Left cardiac atrium (tissue), 4 donors: ENCODE measurements at regions of chr3 and their contacts with region 1.

Region 1: GRCh38 chr3:58532794-58533220 is 4.2 kb downstream of the ACOX2 start:
- DNase-seq: peak; percentile 74
- ATAC-seq: peak; percentile 43 to 58

Region 2: DNA sequence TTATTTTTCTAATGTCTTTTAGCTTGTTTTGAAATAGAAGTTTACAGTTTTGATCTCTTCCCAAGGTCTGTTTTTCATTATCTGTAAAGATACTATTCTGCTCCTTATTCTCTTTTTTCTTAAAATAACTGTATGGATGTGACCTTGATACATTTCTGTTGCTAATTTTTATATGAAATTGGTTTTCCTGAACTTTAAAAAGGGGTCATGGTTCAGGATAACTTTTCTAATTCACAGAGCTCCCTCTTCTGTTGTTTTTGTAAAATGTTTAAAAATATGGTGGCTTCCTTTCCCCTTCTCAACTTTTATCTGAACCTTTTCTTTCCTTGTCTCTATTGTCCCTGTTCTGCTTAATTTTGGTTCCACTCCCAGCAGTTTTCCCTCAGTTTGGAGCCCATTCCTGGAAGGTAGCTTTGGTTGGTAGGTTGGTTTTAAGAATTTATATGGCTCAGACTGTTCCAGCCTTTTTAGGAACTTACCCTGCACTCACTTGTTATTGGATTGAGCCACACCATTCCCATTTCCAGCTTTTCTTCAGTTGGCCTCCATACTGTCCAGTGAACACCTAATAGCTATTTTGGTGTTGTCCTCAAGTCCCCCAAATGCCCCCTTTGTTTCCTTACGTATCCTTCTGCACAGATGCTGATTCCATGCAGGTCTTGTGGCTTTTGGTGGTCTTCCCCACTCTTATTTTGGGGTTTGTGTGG is 706.4 kb before region 1 on chr3:
- intact Hi-C with region 1: no loop called
- DNase-seq: no peak
- ATAC-seq: no peak

Region 3: DNA sequence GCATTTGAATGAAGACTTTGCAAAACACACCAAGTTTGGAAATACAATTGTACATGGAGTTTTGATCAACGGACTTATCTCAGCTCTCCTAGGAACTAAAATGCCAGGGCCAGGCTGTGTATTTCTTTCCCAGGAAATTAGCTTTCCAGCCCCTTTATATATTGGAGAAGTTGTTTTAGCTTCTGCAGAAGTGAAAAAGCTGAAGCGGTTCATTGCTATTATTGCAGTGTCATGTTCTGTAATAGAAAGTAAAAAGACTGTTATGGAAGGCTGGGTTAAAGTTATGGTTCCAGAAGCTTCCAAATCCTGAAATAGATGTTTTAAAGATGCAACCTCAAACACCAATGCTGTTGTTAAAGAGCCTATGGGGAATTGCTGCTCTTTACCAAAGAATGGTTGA is 215.0 kb before region 1 on chr3:
- intact Hi-C with region 1: loop called in 1 of 2 experiments (anchors 5 kb)
- DNase-seq: no peak
- ATAC-seq: no peak

Region 4: GRCh38 chr3:58388550-58389091 is 144.2 kb before region 1 on chr3:
- intact Hi-C with region 1: no loop called
- DNase-seq: no peak
- ATAC-seq: no peak

Region 5: DNA sequence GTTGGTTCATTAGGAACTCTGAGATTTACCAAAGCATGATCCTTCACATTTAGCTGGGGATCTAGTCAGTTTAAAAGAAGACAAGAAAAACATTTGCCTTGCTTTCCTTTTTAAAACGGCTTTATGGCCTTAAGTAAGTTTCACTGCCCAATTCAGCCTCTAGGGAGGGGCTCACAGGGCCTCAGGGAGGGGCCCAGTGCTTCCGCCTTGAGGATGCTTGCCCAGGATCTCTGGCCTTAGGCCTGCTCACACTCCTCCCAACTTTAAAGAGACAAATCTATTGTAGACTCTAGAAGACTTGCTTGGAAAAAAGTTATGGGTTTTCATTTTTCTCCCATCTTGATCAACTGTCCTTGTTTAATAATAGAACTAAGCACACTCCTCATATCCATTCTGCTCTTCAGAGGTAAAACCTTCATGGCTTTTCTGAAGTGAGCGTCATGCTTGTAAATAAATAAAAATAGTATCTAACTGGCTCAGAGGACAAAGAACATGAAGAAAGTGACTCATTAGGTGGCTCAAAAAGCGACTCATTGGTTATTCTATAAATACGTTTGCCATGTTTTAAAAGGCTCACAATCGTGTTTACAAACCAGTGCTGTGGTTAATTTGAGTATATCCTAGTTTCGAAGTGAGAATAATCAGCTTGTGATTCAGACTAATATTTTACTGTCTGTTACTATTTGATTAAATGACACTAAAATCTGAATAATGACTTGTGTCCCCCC is 112.9 kb before region 1 on chr3:
- intact Hi-C with region 1: loop called in 1 of 2 experiments (anchors 5 kb)
- DNase-seq: peak; percentile 68
- ATAC-seq: peak; percentile 78 to 87

Region 6: DNA sequence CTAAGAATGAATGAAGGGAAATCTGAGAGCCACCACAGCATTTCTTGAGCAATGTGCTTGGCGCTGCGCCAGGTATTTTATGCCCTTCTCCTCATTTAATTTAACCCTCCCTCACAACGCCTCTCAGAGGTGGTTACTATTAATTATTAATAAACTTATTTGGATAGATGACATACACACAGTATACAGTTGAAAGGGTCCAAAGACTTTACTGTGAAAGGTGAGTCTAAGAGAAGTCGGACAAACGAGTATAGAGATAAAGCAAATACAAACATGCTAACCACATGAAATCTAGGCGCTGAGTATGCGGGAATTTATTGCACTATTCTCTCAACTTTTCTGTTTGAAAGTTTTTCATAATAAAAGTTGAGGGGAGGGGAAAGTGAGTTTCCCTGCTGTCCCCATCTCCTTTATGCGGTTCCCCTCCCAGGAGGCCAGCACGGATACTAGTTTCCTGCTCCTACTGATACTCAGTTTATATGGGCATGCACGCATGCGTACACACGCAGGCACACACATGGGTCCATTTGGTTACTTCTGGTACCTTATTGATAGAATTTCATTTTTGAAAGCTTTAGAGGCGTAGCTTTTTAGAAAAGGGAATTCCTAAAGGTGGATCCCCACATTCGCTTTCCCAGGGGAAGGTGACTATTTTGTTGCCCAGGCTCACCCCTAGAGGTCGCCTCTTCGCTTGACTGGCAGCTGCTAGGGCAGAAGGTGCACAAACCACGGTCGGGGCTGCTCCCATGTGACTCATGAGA is 69.4 kb before region 1 on chr3:
- intact Hi-C with region 1: loop called in 1 of 2 experiments (anchors 5 kb)
- DNase-seq: peak; percentile 80
- ATAC-seq: peak; percentile 90 to 97

Region 7: GRCh38 chr3:58998476-58999117 is 465.8 kb after region 1 on chr3:
- intact Hi-C with region 1: no loop called
- DNase-seq: no peak
- ATAC-seq: peak in 1 of 2 donors; percentile 97